ENCODE measurements at regions of chr5 and their contacts with region 1.

Region 1: GRCh38 chr5:77133061-77133758 is 46.1 kb upstream of the ZBED3 start:
- DNase-seq: peak in 2 of 4 donors; percentile 13 to 70
- ATAC-seq: peak; percentile 90
- H3K4me3 ChIP-seq: no peak overlapping the region
- H3K27ac ChIP-seq: no peak overlapping the region
- H3K4me1 ChIP-seq: no peaks in the 10 kb centered on the region
- H3K27me3 ChIP-seq: no peaks in the 10 kb centered on the region
- CTCF ChIP-seq: no peak

Region 2: DNA sequence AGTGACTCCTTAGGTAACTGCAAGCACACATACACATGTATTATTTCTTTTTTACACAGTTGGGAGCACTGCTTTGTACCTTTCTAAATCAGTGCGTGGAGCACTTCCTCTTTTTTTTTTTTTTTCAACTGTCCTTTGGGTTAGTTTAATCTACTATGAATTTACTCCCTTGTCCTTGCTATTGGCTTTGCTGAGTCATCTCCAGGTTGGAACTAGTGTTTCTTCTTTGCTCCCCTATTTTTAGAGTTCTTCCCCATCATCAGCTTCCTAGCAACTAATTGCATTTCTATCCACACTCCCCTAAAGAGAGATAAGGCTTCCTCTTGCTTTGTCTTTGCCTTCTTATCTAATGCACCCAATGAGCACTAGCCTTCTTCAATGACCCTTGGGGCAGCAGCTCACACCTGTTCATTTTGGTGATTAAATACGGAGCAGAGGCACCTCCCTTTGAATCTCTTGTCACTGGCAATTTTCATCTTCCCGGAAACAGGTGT is 259.1 kb before region 1 on chr5:
- intact Hi-C with region 1: no loop called
- DNase-seq: no peak
- ATAC-seq: no peak
- H3K4me3 ChIP-seq: no peak overlapping the region
- H3K27ac ChIP-seq: no peak overlapping the region
- H3K4me1 ChIP-seq: no peaks in the 10 kb centered on the region
- H3K27me3 ChIP-seq: no peaks in the 10 kb centered on the region
- CTCF ChIP-seq: no peak

Region 3: DNA sequence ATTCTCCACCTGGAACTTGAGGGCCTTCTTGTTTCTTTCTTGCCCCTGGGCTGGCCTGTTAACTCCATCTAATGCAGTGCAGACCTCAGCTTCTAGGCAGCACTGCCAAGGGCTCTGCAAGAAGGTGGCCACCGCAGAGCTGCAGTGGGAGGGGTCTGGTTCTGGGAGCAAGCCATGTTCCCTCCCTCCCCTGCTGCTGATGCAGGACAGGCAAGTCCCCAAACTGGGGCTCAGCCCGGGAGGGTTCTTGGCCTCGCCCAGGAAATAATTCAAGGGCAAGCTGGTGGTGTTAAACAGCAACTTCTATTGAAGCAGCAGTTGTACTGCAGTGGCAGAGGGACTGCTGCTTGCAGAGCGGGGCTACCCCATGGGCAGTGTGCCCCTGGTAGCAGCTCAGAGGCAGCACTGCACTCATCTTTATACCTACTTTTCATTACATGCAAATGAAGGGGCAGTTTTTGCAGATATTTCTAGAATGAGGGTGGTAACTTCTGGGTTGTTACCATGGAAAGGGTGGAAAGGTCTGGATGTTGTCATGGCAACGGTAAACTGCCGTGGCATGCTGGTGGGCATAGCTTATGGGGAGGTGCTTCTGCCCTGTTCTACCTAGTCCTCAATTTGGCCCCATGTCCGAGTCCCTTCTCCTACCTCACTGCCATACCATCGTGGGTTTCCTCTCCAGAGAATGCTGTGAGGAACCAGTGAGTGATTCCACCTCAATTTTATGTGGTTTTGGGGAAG is 276.8 kb after region 1 on chr5:
- intact Hi-C with region 1: no loop called
- DNase-seq: peak in 1 of 4 donors; percentile 58
- ATAC-seq: no peak
- H3K4me3 ChIP-seq: no peak overlapping the region
- H3K27ac ChIP-seq: no peak overlapping the region
- H3K4me1 ChIP-seq: no peaks in the 10 kb centered on the region
- H3K27me3 ChIP-seq: no peaks in the 10 kb centered on the region
- CTCF ChIP-seq: no peak

Region 4: DNA sequence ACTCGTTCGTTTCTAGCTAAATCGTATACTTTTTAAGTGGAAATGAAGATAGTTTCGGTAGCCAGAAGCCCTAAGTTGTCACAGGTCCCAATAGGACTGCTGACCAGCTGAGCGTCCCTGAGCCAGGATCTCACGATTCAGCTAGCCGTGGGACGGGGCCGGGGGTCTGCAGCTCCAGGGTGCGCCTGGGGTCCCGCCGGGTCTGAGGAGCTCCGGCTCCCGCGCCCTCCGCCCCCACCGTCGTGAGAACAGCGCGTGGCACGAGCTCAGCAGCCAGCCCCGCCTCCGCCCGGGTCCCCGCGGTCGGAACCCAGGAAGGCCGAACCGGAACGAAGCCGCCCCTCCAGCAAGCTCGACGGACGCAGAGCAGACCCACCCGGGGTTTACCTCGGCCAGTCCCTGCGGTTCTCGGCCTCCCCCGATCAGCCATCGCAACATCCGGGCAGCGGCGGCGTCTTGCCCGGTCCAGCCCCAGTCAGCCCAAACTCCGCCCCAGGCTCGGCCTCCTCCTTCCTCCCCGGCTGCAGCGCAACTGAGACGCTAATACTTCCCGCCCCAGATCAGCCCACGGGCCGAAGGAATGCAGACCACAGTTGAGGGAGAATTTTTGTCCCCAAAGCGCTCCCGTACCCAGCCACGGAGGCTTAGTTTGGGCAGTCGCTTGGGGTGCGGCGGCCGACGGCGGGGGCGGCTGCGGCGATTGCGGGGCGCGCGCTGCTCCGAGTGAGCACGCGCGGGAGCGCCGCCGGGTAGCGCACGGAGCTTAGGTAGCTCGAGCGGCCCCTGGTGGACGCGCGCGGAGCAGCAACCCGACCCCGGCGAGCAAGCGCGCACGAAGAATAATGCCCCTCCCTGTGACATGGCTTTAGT is 358.8 kb after region 1 on chr5 and contains the start of gene WDR41:
- intact Hi-C with region 1: loop called in 1 of 2 experiments (anchors 10 kb)
- DNase-seq: peak; percentile 94 to 98 (median 96)
- ATAC-seq: peak; percentile 95
- H3K4me3 ChIP-seq: peak within 1 kb of the TSS; percentile 65 to 81
- H3K27ac ChIP-seq: peak within 1 kb of the TSS; percentile 98
- H3K4me1 ChIP-seq: peaks cover 7 to 19% of the 10 kb centered on the region in 2 donors
- H3K27me3 ChIP-seq: no peaks in the 10 kb centered on the region
- CTCF ChIP-seq: peak; percentile 96 to 97
- polyA plus RNA-seq, gene WDR41: 64.0 to 74.0 (median 69.3) TPM